Panc1 (cell line): ENCODE measurements at regions of chr6 and their contacts with region 1.

Region 1: DNA sequence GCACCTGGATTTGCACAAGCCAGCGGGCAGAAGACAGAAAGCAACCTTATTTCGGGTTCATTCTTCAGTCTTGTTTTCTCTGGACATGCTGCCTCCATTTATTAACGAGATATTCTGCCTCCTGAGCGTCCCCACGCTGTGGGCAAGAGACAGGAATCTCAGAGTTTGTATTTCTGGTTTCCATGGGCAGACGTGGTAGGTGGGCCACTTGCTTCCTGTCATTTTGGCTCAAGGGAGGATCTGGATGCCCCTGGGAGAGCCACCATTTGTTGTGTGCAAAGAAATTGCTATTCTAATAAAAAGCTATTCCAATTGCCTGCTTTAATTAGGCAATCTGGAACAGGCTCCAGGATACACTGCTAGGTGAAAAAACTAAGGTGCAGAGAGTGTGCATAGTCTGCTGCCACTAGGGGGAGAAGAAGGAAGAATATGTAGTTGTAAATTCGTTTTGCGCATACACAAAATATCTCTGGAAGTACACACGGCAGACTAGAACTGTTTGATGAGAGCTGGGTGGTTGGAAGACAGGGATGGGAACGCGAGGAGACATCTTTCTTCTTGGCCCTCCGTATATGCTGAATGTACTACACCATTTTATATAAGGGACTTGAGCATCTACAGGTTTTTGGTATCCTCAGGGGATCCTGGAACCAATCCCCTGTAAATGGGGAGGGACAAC is 30.1 kb upstream of the SLC16A10 start:
- DNase-seq: peak; percentile 47
- ATAC-seq: peak; percentile 90
- H3K4me3 ChIP-seq: no peak overlapping the region
- H3K27ac ChIP-seq: no peak overlapping the region
- H3K4me1 ChIP-seq: peaks cover 3% of the 10 kb centered on the region; the same call in 1 of the 2 replicates
- H3K27me3 ChIP-seq: peaks cover 2% of the 10 kb centered on the region; the same call in 1 of the 2 replicates
- CTCF ChIP-seq: peak; percentile 95

Region 2: DNA sequence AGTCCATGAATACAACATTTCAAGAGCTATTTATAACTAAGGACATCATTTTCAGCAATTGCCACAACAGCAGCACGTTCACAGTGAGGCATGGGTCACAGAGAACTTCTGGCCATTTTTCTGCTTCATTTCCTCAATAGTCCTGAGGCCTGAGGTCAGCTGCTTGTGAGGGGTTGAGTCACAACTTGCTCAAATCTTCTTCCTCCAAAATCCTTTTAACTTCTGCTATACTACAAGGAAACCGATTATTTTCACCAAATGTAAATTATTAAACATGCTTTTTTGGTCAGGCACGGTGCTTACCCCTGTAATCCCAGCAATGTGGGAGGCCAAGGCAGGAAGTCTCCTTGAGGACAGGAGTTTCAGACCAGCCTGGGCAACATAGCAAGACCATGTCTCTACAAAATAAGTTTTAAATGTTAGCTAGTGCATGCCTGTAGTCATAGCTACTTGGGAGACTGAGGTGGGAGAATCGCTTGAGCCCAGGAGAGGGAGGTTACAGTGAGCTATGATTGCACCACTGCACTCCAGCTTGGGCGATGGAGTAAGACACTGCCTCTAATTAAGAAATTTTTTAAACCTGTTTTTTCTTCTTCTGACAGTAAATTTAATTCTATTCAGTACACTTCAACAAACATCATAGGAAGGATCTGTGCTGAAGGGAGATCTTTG is 18.9 kb after region 1 on chr6:
- CTCF ChIA-PET with region 1: interaction called, 14 read pairs
- POLR2A ChIA-PET with region 1: interaction called, 11 read pairs
- in situ Hi-C with region 1: no loop called
- intact Hi-C with region 1: no loop called
- DNase-seq: no peak
- ATAC-seq: no peak
- H3K4me3 ChIP-seq: no peak overlapping the region
- H3K27ac ChIP-seq: no peak overlapping the region
- H3K4me1 ChIP-seq: no peaks in the 10 kb centered on the region
- H3K27me3 ChIP-seq: peaks cover 28% of the 10 kb centered on the region
- CTCF ChIP-seq: no peak